ENCODE measurements at regions of chr5 and their contacts with region 1.

Region 1: DNA sequence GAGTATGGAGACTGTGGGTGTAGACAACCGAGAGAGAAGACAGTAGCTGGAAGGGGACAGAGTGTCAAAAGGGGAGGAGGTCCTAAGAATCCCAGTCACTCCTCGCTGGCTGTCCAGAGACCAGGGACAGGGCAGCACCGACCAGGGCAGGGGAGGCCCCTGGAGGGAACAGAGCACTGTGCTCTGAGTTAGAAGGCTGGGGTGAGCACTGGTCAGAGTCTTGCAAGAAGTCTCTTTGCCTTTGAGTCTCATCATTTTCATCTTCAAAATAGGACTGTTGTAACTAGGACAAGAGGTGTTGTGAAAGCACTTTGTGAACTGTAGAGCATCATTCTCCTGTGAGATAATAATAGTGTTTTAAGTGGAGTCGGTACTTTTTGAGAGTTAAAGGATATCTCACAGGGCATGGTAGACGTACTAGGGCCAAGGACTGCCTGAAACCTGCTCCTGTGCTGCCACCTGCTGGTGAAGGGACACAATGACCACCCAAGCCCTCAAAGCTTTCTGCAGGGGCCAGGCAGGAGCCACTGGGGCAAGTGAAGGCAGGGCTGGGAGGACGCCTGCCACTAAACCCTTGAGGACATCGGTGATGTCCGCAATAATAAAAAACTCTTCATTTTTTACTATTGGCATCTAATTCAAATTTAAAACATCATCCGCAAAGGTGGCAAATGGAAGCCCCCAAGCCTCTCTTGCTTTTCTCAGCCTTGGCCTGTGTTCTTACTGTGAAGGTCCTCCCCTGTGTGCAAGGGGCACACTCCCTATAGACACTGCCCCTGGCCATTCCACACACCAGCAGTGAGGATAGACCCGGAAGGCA is 28.2 kb downstream of the SLC6A7 start:
- DNase-seq: peak; percentile 64 to 86 (median 74)
- ATAC-seq: peak; percentile 93
- H3K4me3 ChIP-seq: no peak overlapping the region
- H3K4me3 Mint-ChIP-seq: no peak overlapping the region
- H3K27ac ChIP-seq: no peak overlapping the region
- H3K27ac Mint-ChIP-seq: no peak overlapping the region
- H3K4me1 ChIP-seq: peaks cover 4% of the 10 kb centered on the region
- H3K4me1 Mint-ChIP-seq: peaks cover 4% of the 10 kb centered on the region
- H3K27me3 ChIP-seq: peaks cover 2 to 6% of the 10 kb centered on the region in 2 experiments
- H3K27me3 Mint-ChIP-seq: peaks cover 17% of the 10 kb centered on the region
- CTCF ChIP-seq: peak; percentile 83

Region 2: GRCh38 chr5:149636851-149637246 is 581.2 kb before region 1 on chr5:
- CTCF ChIA-PET with region 1: no interaction called
- POLR2A ChIA-PET with region 1: no interaction called
- intact Hi-C with region 1: loop called (anchors 2 to 5 kb)
- DNase-seq: peak in 8 of 14 experiments; percentile 35 to 83 (median 64)
- ATAC-seq: peak; percentile 57
- H3K4me3 ChIP-seq: no peak overlapping the region
- H3K4me3 Mint-ChIP-seq: no peak overlapping the region
- H3K27ac ChIP-seq: no peak overlapping the region
- H3K27ac Mint-ChIP-seq: no peak overlapping the region
- H3K4me1 ChIP-seq: peaks cover 2% of the 10 kb centered on the region
- H3K4me1 Mint-ChIP-seq: no peaks in the 10 kb centered on the region
- H3K27me3 ChIP-seq: no peaks in the 10 kb centered on the region
- H3K27me3 Mint-ChIP-seq: no peaks in the 10 kb centered on the region
- CTCF ChIP-seq: peak; percentile 92

Region 3: DNA sequence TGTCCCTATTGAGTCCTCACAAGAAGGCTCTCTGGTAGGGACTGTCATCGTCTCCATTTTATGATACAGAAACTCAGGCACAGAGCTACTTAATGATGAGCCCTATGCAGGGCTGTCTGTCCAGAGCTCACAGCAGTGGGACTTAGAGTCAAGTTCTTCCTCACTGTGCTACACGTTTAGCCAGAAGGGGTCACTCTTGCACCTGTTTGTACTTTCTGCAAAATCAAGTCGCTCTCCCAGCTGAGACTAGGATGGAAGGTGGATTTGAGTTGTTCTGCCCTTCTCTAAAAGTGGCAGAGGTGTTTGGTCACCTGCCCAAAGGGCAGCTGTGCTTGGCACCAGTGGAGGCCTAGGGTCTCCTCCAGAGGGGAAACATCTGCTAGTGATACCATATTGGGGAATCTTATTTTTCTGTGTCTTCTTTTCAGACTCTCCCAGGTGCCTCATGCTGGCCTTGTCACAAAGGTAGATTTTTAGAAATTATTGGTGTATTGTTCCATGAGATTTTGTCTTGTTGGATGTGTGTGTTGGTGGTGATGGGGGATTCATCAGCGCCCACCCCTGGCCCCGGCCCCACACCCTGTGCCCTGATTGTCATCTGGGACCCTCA is 383.7 kb before region 1 on chr5:
- CTCF ChIA-PET with region 1: no interaction called
- POLR2A ChIA-PET with region 1: no interaction called
- intact Hi-C with region 1: loop called in 1 of 2 experiments (anchors 1 kb)
- DNase-seq: peak in 13 of 14 experiments; percentile 5 to 78 (median 32)
- ATAC-seq: peak; percentile 51
- H3K4me3 ChIP-seq: no peak overlapping the region
- H3K4me3 Mint-ChIP-seq: no peak overlapping the region
- H3K27ac ChIP-seq: no peak overlapping the region
- H3K27ac Mint-ChIP-seq: no peak overlapping the region
- H3K4me1 ChIP-seq: no peaks in the 10 kb centered on the region
- H3K4me1 Mint-ChIP-seq: no peaks in the 10 kb centered on the region
- H3K27me3 ChIP-seq: no peaks in the 10 kb centered on the region
- H3K27me3 Mint-ChIP-seq: no peaks in the 10 kb centered on the region
- CTCF ChIP-seq: peak; percentile 61

Region 4: GRCh38 chr5:150129813-150130492 is 88.1 kb before region 1 on chr5:
- CTCF ChIA-PET with region 1: interaction called, 3 read pairs
- POLR2A ChIA-PET with region 1: no interaction called
- intact Hi-C with region 1: loop called (anchors 1 to 2 kb)
- DNase-seq: peak in 10 of 14 experiments; percentile 5 to 62 (median 16)
- ATAC-seq: peak; percentile 43
- H3K4me3 ChIP-seq: no peak overlapping the region
- H3K4me3 Mint-ChIP-seq: no peak overlapping the region
- H3K27ac ChIP-seq: no peak overlapping the region
- H3K27ac Mint-ChIP-seq: no peak overlapping the region
- H3K4me1 ChIP-seq: peaks cover 4% of the 10 kb centered on the region
- H3K4me1 Mint-ChIP-seq: no peaks in the 10 kb centered on the region
- H3K27me3 ChIP-seq: no peaks in the 10 kb centered on the region
- H3K27me3 Mint-ChIP-seq: no peaks in the 10 kb centered on the region
- CTCF ChIP-seq: peak; percentile 62

Region 5: DNA sequence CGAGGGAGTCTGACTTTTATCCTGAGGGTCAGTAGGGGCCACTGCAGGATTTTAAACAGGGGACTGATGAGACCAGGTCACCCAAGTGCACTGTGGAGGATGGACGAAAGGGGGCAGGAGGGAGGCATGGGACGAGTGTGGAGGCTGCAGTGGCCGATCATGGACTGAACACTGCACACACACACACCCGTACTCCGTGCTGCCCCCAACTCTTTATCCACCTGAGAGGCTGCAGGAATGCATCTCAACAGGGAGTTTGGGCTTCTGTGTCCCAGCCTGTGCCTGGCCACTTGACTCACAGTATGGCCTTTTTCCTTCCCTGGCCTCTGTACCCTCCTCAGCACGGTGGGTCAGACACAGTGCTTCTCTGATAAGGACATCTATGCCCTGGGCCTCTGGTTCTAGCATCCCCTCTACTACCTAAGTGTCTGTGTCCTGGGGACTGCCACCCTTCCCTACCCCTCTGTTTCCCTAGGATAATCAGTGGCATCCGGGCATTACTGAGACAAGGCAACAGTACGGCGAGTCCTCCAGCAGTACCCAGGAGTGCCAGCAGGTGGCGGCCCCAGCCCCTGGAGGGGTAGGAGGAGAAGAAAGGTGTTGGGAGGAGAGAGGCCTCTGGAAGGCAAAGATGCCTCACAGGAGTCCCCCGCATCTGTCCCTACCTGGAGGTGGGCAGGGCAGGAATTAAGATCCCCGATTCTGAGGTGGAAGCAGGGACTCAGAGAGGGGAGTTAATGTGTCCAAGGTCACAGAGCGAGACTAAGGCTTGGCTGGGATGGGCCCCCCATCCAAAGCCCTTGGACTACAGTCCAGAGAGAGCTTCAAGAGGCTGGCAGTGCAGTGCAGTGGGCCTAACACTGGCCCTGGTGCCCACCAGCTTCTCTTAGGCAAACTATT is 56.6 kb before region 1 on chr5:
- CTCF ChIA-PET with region 1: no interaction called
- POLR2A ChIA-PET with region 1: no interaction called
- intact Hi-C with region 1: loop called (anchors 1 kb)
- DNase-seq: peak; percentile 48 to 79 (median 66)
- ATAC-seq: peak; percentile 77
- H3K4me3 ChIP-seq: no peak overlapping the region
- H3K4me3 Mint-ChIP-seq: no peak overlapping the region
- H3K27ac ChIP-seq: no peak overlapping the region
- H3K27ac Mint-ChIP-seq: no peak overlapping the region
- H3K4me1 ChIP-seq: no peaks in the 10 kb centered on the region
- H3K4me1 Mint-ChIP-seq: no peaks in the 10 kb centered on the region
- H3K27me3 ChIP-seq: peaks cover 10 to 18% of the 10 kb centered on the region in 2 experiments
- H3K27me3 Mint-ChIP-seq: peaks cover 37% of the 10 kb centered on the region
- CTCF ChIP-seq: peak; percentile 87